Adrenal gland (tissue), 19 donors: ENCODE measurements at regions of chr9 and their contacts with region 1.

Region 1: GRCh38 chr9:136283291-136284235 is 20.3 kb downstream of the CCDC187 start:
- DNase-seq: peak; percentile 75 to 88 (median 79)
- H3K4me3 ChIP-seq: peak overlapping the region in 1 of 4 donors; percentile 9
- H3K27ac ChIP-seq: no peak overlapping the region
- H3K4me1 ChIP-seq: no peaks in the 10 kb centered on the region
- H3K27me3 ChIP-seq: peaks cover 15% of the 10 kb centered on the region
- CTCF ChIP-seq: peak; percentile 75 to 91 (median 83)
- POLR2A ChIP-seq: no peak

Region 2: DNA sequence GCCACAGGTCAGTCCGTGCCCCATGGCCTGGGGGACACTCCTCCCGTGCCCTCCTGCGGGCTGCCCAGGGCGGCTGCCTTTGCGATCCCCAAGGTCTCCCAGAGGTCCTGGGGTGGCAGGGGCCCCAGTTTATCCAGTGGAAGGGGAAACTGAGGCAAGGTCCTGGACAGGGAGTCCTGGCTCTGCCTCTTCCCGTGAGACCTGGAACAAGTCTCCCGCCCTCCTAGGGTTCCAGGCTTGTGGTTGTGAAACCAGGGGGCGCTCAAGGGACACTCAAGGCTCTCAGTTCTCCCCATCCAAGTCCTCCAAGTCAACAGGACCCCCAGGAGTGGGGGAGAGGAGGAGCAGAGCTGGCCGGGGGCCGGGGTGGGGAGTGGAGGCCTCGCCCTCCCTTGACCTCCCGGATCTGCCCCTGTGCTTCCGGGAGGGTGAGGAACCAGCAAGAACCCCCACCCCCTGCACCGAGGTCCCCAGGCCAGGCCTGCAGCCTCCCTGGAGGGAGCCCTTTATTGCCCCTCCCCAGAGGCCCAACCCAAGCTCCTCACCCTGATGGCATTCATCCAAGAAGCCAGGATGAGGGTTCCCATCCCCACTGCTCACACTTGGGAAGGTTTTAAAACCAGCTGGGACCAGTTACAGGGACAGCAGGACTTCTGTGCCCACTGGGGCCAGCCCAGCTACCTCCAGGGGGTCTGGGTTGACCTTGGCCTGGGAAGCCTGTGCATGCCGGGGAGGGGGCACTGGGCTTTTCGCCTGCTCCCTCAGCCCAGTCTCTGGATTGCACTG is 140.2 kb before region 1 on chr9:
- intact Hi-C with region 1: loop called in 1 of 2 experiments (anchors 10 kb)
- DNase-seq: no peak
- H3K4me3 ChIP-seq: no peak overlapping the region
- H3K27ac ChIP-seq: no peak overlapping the region
- H3K4me1 ChIP-seq: no peaks in the 10 kb centered on the region
- H3K27me3 ChIP-seq: peaks cover 28% of the 10 kb centered on the region
- CTCF ChIP-seq: peak in 1 of 6 experiments; percentile 20
- POLR2A ChIP-seq: no peak